B cell (primary cell): ENCODE measurements at regions of chr11 and their contacts with region 1.

Region 1: GRCh38 chr11:105034813-105035620 is at the start of gene CASP1:
- DNase-seq: peak; percentile 58
- ATAC-seq: peak; percentile 82
- H3K4me3 ChIP-seq: peak within 1 kb of the TSS; percentile 39 to 79 (median 70)
- H3K4me3 Mint-ChIP-seq: peak within 1 kb of the TSS; percentile 87
- H3K27ac ChIP-seq: peak within 1 kb of the TSS; percentile 55 to 74
- H3K27ac Mint-ChIP-seq: peak within 1 kb of the TSS; percentile 87
- H3K4me1 ChIP-seq: peaks cover 25 to 28% of the 10 kb centered on the region in 2 donors
- H3K4me1 Mint-ChIP-seq: peaks cover 40% of the 10 kb centered on the region
- H3K27me3 ChIP-seq: no peaks in the 10 kb centered on the region
- H3K27me3 Mint-ChIP-seq: no peaks in the 10 kb centered on the region
- CTCF ChIP-seq: no peak
- total RNA-seq, gene CASP1: 26.1 and 31.9 TPM in 2 replicates

Region 2: GRCh38 chr11:104705490-104706190 is 329.4 kb before region 1 on chr11:
- CTCF ChIA-PET with region 1: no interaction called
- POLR2A ChIA-PET with region 1: no interaction called
- intact Hi-C with region 1: loop called (anchors 10 kb)
- DNase-seq: peak; percentile 69
- ATAC-seq: peak; percentile 91
- H3K4me3 ChIP-seq: peak overlapping the region; percentile 20 to 57 (median 51)
- H3K4me3 Mint-ChIP-seq: peak overlapping the region; percentile 80
- H3K27ac ChIP-seq: peak overlapping the region; percentile 46 to 87
- H3K27ac Mint-ChIP-seq: peak overlapping the region; percentile 91
- H3K4me1 ChIP-seq: peaks cover 21 to 23% of the 10 kb centered on the region in 2 donors
- H3K4me1 Mint-ChIP-seq: peaks cover 22% of the 10 kb centered on the region
- H3K27me3 ChIP-seq: no peaks in the 10 kb centered on the region
- H3K27me3 Mint-ChIP-seq: no peaks in the 10 kb centered on the region
- CTCF ChIP-seq: no peak

Region 3: GRCh38 chr11:104968355-104968855 is 66.6 kb before region 1 on chr11 and contains the start of gene CASP4:
- CTCF ChIA-PET with region 1: no interaction called
- POLR2A ChIA-PET with region 1: no interaction called
- intact Hi-C with region 1: loop called (anchors 5 kb)
- DNase-seq: peak; percentile 72
- ATAC-seq: peak; percentile 75
- H3K4me3 ChIP-seq: peak within 1 kb of the TSS; percentile 66 to 99 (median 85)
- H3K4me3 Mint-ChIP-seq: peak within 1 kb of the TSS; percentile 94
- H3K27ac ChIP-seq: peak within 1 kb of the TSS; percentile 85 to 97
- H3K27ac Mint-ChIP-seq: peak within 1 kb of the TSS; percentile 92
- H3K4me1 ChIP-seq: peaks cover 30 to 32% of the 10 kb centered on the region in 2 donors
- H3K4me1 Mint-ChIP-seq: peaks cover 39% of the 10 kb centered on the region
- H3K27me3 ChIP-seq: no peaks in the 10 kb centered on the region
- H3K27me3 Mint-ChIP-seq: no peaks in the 10 kb centered on the region
- CTCF ChIP-seq: no peak
- total RNA-seq, gene CASP4: 72.4 and 82.8 TPM in 2 replicates

Region 4: GRCh38 chr11:106076919-106077608 is 1042.0 kb after region 1 on chr11 and contains the start of gene KBTBD3:
- CTCF ChIA-PET with region 1: no interaction called
- POLR2A ChIA-PET with region 1: no interaction called
- intact Hi-C with region 1: loop called (anchors 5 kb)
- DNase-seq: peak; percentile 99
- ATAC-seq: peak; percentile 91
- H3K4me3 ChIP-seq: peak within 1 kb of the TSS; percentile 72 to 96 (median 77)
- H3K4me3 Mint-ChIP-seq: peak within 1 kb of the TSS; percentile 100
- H3K27ac ChIP-seq: peak within 1 kb of the TSS; percentile 92 to 93
- H3K27ac Mint-ChIP-seq: peak within 1 kb of the TSS; percentile 99
- H3K4me1 ChIP-seq: peaks cover 12 to 23% of the 10 kb centered on the region in 2 donors
- H3K4me1 Mint-ChIP-seq: peaks cover 48% of the 10 kb centered on the region
- H3K27me3 ChIP-seq: no peaks in the 10 kb centered on the region
- H3K27me3 Mint-ChIP-seq: no peaks in the 10 kb centered on the region
- CTCF ChIP-seq: peak; percentile 73
- total RNA-seq, gene KBTBD3: 15.5 and 18.3 TPM in 2 replicates